Left lung (tissue), 14 donors: ENCODE measurements at regions of chr12 and their contacts with region 1.

Region 1: GRCh38 chr12:49945394-49946080 is 5.0 kb upstream of the AQP2 start:
- DNase-seq: peak; percentile 62 to 96 (median 80)
- ATAC-seq: peak; percentile 94
- H3K4me3 ChIP-seq: no peak overlapping the region
- H3K27ac ChIP-seq: no peak overlapping the region
- H3K4me1 ChIP-seq: peaks cover 3 to 8% of the 10 kb centered on the region in 2 donors
- H3K27me3 ChIP-seq: peaks cover 0 to 12% of the 10 kb centered on the region in 2 donors
- CTCF ChIP-seq: peak; percentile 82 to 88

Region 2: GRCh38 chr12:49842519-49843352 is 102.8 kb before region 1 on chr12 and contains the start of gene BCDIN3D:
- intact Hi-C with region 1: no loop called
- DNase-seq: peak; percentile 74 to 99 (median 93)
- ATAC-seq: peak; percentile 97
- H3K4me3 ChIP-seq: peak within 1 kb of the TSS; percentile 65 to 73
- H3K27ac ChIP-seq: peak within 1 kb of the TSS; percentile 87 to 93
- H3K4me1 ChIP-seq: peaks cover 8 to 19% of the 10 kb centered on the region in 2 donors
- H3K27me3 ChIP-seq: peaks cover 0 to 4% of the 10 kb centered on the region in 2 donors
- CTCF ChIP-seq: no peak
- polyA plus RNA-seq, gene BCDIN3D: 5.6 to 7.3 (median 5.9) TPM

Region 3: DNA sequence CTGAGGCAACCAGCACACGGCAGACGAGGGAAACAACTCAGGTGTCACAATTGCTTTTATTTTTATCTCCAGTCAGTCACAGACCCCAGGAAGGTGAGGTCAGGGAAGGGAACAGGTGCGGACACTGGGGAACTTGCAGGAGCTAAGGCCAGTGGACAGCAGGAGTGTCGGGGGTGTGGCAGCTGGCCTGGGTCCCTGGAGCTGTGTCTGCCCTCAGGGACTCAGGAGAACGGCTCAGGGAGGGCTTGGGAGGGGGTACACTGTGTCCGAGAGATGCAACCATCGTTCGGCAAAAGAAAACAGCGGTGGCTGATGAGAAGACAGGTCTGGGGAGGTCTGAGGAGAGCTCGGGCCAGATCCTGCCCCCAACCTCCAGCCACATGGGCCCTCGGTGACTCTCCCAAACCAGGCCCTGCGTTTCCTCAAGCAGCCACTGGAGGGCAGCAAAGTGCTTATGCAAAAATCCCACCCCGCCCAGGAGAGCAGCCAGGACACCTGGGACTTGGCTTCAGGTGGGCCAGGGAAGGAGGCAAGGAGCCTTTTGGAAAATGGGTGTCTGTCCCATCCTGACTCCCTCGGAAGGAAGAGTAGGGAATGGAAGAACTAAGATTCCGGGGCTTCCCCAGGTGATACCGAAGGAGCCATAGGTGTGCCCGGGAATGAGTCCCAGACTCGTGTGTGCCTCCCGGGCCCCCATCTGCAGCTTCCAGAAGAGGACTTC is 78.5 kb before region 1 on chr12:
- intact Hi-C with region 1: loop called in 1 of 2 experiments (anchors 10 kb)
- DNase-seq: peak; percentile 55 to 88 (median 75)
- ATAC-seq: peak; percentile 84
- H3K4me3 ChIP-seq: no peak overlapping the region
- H3K27ac ChIP-seq: peak overlapping the region in 1 of 2 donors; percentile 28
- H3K4me1 ChIP-seq: peaks cover 20 to 29% of the 10 kb centered on the region in 2 donors
- H3K27me3 ChIP-seq: no peaks in the 10 kb centered on the region
- CTCF ChIP-seq: peak; percentile 96 to 97